ENCODE measurements at regions of chr1 and their contacts with region 1.

Region 1: GRCh38 chr1:173429471-173430402 is 47.4 kb upstream of the PRDX6 start:
- DNase-seq: peak; percentile 63 to 75
- ATAC-seq: peak; percentile 76 to 80
- H3K4me3 ChIP-seq: peak overlapping the region; percentile 10 to 46 (median 40)
- H3K27ac ChIP-seq: peak overlapping the region; percentile 76 to 83 (median 82)
- H3K4me1 ChIP-seq: peaks cover 28 to 29% of the 10 kb centered on the region in 2 donors
- H3K27me3 ChIP-seq: no peaks in the 10 kb centered on the region
- CTCF ChIP-seq: peak; percentile 9 to 72 (median 58)
- POLR2A ChIP-seq: peak; percentile 11 to 18

Region 2: GRCh38 chr1:172054172-172054571 is 1375.6 kb before region 1 on chr1:
- in situ Hi-C with region 1: no loop called
- intact Hi-C with region 1: no loop called
- DNase-seq: no peak
- ATAC-seq: no peak
- H3K4me3 ChIP-seq: no peak overlapping the region
- H3K27ac ChIP-seq: no peak overlapping the region
- H3K4me1 ChIP-seq: no peaks in the 10 kb centered on the region
- H3K27me3 ChIP-seq: no peaks in the 10 kb centered on the region
- CTCF ChIP-seq: no peak
- POLR2A ChIP-seq: no peak

Region 3: DNA sequence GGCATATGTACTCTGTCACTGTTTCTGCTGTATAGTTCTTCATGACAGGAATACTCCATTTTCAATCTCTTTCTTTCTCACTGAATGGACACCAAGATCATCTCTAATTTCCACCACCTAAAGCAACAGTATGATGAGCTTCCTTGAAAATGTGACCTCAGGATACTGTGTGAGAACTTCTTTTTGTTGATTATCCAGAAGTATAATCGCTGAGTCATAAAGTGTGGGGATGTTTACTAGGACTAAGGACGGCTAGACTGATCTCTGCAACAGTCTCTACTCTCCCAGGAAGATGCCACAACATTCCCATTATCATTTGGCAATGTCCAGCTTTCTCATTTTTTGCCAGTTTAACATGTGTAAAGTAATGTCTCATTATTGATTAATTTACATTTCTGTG is 449.3 kb before region 1 on chr1:
- in situ Hi-C with region 1: no loop called
- intact Hi-C with region 1: no loop called
- DNase-seq: no peak
- ATAC-seq: no peak
- H3K4me3 ChIP-seq: no peak overlapping the region
- H3K27ac ChIP-seq: no peak overlapping the region
- H3K4me1 ChIP-seq: no peaks in the 10 kb centered on the region
- H3K27me3 ChIP-seq: no peaks in the 10 kb centered on the region
- CTCF ChIP-seq: no peak
- POLR2A ChIP-seq: no peak

Region 4: GRCh38 chr1:173328961-173329360 is 100.8 kb before region 1 on chr1:
- in situ Hi-C with region 1: no loop called
- intact Hi-C with region 1: no loop called
- DNase-seq: no peak
- ATAC-seq: no peak
- H3K4me3 ChIP-seq: no peak overlapping the region
- H3K27ac ChIP-seq: no peak overlapping the region
- H3K4me1 ChIP-seq: peaks cover 0 to 6% of the 10 kb centered on the region in 2 donors
- H3K27me3 ChIP-seq: no peaks in the 10 kb centered on the region
- CTCF ChIP-seq: no peak
- POLR2A ChIP-seq: no peak

Region 5: DNA sequence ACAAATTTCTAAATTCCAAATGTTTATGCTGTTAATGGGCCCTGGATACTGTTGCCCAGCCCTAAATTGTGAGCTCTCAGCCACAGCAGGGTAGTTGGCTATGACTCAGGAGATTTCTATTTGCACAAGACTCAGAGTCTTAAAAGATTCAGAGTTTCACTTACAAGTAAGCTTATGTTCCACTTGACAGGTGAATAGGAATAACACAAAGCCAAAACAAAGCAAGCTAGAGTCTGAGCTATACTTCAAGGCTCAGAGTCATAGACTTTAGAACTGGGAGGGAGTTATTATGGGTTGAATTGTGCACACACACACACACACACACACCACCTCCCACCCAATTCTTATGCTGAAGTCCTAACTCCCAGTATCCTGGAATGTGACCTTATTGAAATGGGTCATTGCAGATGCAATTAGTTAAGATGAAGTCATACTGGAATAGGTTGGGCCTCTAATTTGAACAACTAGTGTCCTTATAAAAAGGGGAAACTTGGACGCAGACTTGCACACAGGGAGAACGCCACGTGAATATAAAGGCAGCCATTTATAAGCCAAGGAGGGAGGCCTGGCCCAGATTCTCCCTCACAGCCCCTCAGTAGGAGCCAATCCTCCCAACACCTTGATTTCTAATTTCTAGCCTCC is 77.6 kb after region 1 on chr1:
- in situ Hi-C with region 1: no loop called
- intact Hi-C with region 1: loop called (anchors 5 kb)
- DNase-seq: no peak
- ATAC-seq: no peak
- H3K4me3 ChIP-seq: no peak overlapping the region
- H3K27ac ChIP-seq: no peak overlapping the region
- H3K4me1 ChIP-seq: no peaks in the 10 kb centered on the region
- H3K27me3 ChIP-seq: no peaks in the 10 kb centered on the region
- CTCF ChIP-seq: no peak
- POLR2A ChIP-seq: no peak

Region 6: GRCh38 chr1:174159252-174160108 is 729.7 kb after region 1 on chr1 and contains the start of gene RABGAP1L:
- in situ Hi-C with region 1: loop called in 1 of 4 experiments (anchors 25 kb)
- intact Hi-C with region 1: no loop called
- DNase-seq: peak; percentile 88 to 90
- ATAC-seq: peak; percentile 94
- H3K4me3 ChIP-seq: peak within 1 kb of the TSS; percentile 90 to 100 (median 93)
- H3K27ac ChIP-seq: peak within 1 kb of the TSS; percentile 92 to 98 (median 94)
- H3K4me1 ChIP-seq: peaks cover 3 to 11% of the 10 kb centered on the region in 2 donors
- H3K27me3 ChIP-seq: no peaks in the 10 kb centered on the region
- CTCF ChIP-seq: peak in 2 of 5 experiments; percentile 9 to 17
- POLR2A ChIP-seq: peak; percentile 73 to 79
- total RNA-seq, gene RABGAP1L: 8.8 to 22.2 (median 14.9) TPM

Region 7: DNA sequence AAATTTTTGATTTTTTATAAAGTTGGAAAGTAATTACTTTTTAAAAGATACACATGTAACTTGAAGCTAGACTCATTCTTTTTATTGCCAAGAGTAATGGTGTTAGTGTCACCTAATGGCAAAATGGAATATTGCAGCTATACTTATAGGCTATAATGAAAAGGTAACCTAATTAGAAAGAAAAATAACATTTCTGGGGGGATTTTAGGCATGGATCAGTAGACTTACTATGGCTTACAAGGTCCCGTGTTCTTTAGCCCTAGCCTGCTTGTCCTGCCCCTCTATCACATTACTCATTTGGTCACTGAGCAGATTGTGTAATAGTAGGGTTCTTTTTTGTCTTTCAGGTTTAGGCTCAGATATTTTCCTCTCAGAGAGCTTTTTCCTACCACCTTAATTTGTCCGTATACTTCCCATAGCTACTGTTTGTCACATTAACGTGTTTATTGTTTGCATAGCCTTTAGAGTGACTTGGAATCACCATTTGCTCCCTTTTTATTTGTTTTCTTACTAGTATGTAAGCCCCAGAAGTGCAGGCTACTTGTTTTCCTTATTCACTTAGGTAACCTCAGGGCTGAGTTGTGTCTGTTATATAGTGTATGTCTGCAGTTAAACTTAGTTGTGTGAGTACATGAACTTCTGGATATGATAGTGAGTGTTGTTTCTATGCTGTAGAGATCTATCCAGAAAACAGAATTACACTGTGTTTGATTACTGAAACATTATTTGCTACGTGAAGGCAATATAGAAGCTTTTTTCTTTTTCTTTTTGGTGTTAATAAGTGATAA is 788.2 kb after region 1 on chr1:
- in situ Hi-C with region 1: no loop called
- intact Hi-C with region 1: loop called (anchors 5 kb)
- DNase-seq: no peak
- ATAC-seq: peak; percentile 58 to 64
- H3K4me3 ChIP-seq: no peak overlapping the region
- H3K27ac ChIP-seq: no peak overlapping the region
- H3K4me1 ChIP-seq: peaks cover 0 to 8% of the 10 kb centered on the region in 2 donors
- H3K27me3 ChIP-seq: no peaks in the 10 kb centered on the region
- CTCF ChIP-seq: peak; percentile 44 to 78 (median 68)
- POLR2A ChIP-seq: no peak